Cardiac septum (tissue), 1 donor: ENCODE measurements at regions of chr1 and their contacts with region 1.

Region 1: GRCh38 chr1:26787706-26788514 is at the start of gene PIGV:
- DNase-seq: peak; percentile 93
- total RNA-seq, gene PIGV: 3.9 TPM

Region 2: GRCh38 chr1:26602378-26602959 is 185.4 kb before region 1 on chr1:
- intact Hi-C with region 1: loop called (anchors 1 kb)
- DNase-seq: no peak

Region 3: DNA sequence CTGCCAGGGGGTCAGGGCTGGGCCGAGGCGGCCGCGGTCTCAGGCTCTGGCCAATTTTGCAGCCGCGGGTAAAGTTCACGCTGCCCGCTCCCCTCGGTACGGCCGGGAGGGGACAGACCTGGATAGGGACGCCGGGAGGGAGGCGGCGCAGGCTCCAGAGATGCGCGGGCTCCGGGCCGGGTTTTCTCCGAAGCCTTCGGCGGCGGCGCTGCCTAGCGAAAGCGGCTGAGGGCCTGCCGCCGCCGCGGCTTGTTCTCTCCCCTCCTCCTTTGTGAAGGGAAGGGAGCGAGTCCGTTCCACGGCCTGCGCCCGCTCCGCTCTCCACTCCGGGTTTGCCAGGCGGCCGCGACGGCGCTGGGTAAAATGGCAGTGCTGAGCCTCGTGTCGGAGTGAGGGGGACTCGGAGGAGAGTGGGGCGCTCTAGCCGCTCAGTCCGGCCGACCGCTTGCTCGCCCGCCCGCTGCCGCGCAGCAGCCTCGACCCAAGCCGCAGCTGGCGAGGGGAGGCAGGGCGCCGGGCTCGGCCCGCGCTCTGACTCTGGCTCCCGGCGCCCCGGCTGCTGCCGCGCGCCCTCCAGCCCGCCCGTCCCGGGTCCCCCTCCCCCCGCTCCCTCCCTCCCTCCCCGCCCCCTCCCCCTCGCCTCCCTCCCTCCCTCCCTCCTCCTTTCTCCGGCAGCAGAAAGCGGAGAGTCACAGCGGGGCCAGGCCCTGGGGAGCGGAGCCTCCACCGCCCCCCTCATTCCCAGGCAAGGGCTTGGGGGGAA is 92.4 kb before region 1 on chr1 and contains the start of gene ARID1A:
- intact Hi-C with region 1: loop called (anchors 1 kb)
- DNase-seq: peak; percentile 97
- total RNA-seq, gene ARID1A: 52.1 TPM

Region 4: DNA sequence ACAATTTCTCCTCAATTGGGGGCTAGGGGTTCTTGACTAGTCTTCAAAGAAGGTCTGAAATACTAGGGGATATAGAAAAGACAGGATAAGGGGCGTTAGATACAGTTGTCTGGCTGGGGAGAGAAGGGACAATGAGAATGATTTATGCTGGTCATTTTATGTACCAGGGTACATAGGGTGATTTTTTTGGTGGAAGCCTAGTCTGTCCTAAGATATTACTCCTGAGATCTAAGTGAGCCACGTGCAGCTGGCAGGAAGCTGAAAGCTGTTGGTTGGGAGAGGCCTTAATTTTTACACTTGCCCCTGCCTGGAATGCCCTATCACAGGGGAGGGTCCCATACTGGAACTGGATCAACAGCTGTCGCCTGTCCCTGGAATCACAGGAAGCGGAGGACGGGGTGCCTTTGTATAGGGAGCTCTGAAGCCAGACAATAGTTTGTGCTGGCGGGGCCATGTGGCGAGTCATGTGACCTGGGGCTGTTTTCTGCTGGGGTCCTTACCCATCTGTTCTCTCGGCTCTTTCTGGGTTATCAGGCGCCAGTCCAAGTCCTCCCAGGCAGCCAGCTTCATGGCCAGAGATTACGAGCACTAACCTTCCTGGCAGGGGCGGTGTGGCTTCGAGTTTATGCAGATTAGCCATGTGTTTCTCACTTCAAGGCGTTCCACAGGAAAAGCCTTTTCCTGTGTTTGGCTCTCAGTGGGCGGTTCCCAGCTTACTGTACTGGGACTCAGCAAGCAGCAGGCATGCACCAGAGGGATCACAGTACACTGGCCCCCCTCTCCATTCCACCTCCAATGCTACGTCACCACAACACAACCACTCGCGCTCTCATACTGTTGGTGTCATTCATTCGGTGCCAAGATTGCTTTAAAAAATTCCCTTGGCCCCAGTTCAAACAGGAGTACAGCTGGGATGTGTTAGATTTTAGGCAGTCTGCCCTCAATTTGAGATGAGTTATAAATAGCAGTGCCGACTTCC is 64.6 kb before region 1 on chr1:
- intact Hi-C with region 1: loop called (anchors 2 kb)
- DNase-seq: peak; percentile 93

Region 5: DNA sequence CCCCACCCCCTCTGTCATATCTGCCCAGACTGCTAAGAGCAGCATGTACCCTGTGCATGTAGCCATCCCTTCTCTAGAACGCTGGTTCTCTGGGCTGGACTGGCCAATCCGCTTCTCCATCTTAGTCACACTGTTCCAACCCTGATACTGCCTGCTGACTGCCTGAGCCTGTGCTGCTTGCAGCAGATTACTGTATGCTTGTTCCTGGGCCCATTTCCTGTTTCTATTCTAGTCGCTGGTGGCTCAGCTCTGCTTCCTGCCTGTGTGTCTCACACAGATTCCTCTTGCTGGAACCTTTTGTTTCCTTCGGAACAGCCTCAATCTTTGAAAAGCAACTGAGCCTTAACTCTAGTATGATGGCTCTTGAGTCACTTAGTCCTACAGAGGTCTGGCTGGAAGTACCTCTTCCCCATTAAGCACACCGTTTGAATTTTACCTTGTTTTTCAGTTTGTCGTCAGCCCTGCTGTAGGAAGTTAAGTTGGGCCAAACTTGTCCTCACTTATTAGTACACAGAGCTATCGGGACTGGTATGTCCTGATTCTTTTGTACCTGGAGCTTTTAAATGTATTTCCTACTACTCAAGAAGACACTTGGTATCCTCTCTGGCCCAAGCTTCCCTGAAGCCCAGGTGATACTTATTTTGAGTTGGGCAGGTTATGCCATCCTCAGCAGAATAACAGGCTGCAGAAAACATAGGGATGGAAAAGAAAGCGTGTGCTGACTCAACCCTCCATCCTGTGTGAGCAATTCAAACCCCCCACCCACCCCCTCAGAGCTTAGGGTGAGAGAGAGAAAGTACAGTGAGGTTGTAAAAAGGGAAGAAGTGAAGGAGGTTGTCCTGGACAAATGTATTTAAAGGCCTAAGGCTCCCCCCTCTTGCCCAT is 43.6 kb before region 1 on chr1:
- intact Hi-C with region 1: loop called (anchors 5 kb)
- DNase-seq: peak; percentile 91

Region 6: GRCh38 chr1:26752519-26752918 is 35.4 kb before region 1 on chr1:
- intact Hi-C with region 1: loop called (anchors 2 kb)
- DNase-seq: no peak

Region 7: DNA sequence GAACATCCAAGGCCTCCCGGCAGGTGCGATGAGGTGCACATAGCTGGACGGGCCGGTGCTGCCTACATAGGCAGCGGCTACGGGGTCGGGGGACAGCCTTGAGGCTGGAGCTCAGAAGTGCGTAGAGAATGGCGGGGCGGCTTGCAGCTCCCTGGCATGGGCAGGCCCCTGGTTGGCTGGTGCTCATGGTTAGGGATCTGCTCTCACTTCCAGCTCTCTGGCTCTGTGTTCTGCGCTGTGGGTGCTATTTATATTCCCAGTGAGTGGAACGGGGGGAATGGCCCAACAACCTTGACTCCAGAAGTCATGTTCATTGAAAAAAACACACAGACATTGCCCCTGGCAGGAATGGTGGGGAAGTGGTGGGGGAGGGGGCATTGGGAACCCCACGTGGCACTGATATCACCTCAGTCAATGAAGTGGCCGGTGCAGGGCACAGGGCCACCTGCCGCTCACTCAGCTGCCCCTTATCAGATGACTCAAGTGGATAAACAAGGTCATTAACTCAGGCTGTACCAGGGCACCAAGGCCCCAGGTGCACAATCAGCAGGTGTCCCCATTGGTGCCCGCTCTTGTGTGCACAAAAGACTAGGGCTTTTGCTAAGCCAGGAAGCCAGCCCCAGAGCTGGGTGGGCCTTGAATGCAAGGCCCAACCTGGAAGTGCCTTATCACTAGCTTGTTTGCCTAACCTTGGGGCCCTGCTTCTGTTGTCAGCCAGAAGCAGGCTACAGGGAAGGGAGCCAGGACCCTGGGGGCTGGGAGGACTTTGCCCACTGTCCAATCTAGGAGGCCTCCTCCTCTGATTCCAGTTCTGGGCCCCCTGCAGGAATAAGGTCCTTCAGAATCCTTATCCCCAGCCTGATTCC is 126.1 kb after region 1 on chr1 and contains the start of gene NR0B2:
- intact Hi-C with region 1: no loop called
- DNase-seq: no peak
- total RNA-seq, gene NR0B2: 5.7 TPM